ENCODE measurements at regions of chr12 and their contacts with region 1.

Region 1: DNA sequence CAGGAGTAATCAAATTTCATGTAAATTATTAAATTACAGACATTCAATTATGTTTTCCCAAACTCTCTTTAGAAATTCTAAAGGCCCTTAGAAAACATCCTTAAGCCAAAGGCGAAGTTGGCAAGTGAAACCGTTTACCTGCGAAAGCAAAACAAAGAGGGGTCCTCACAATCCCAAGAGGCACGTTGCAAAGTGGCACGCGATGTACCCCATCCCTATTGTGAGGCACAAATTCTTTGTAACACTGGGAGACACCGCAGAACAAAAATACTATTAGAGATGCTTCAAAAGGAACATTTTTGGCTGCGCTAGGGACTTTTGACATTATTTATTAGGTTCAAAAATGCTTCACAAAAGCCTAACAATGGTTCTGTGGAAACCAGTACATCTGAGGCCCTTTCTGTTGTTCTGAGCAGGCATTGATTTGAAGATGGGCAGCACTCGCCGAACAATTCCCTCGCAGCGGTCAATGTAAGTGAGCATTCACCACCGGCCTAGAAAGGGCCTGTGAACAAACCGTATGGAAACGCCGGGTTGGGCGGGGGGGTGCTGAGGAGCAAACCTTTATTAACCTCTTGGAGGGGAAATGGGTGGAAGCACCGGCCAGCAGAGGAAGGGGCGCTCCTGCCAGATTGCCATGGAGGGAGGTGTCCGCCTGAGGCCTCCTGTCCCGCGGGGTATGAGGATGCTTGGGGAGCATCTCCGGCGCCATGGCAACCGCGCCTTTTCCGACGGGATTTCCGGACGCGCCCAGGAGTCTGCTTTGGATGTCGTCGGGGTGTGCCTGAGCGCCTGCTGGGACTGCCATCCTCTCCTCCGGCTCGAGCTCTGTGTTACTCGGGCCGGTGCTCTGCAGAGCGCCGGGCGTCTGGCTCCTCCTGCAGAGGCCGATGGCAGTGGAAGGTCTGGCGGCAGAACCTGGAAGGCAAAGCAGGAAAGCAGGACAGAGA is 193.9 kb downstream of the C12orf42 start:
- DNase-seq: peak; percentile 10
- ATAC-seq: no peak
- H3K4me3 ChIP-seq: no peak overlapping the region
- H3K4me3 Mint-ChIP-seq: no peak overlapping the region
- H3K27ac ChIP-seq: no peak overlapping the region
- H3K27ac Mint-ChIP-seq: no peak overlapping the region
- H3K4me1 ChIP-seq: peaks cover 0 to 4% of the 10 kb centered on the region in 2 donors
- H3K4me1 Mint-ChIP-seq: peaks cover 9% of the 10 kb centered on the region
- H3K27me3 ChIP-seq: no peaks in the 10 kb centered on the region
- H3K27me3 Mint-ChIP-seq: no peaks in the 10 kb centered on the region
- CTCF ChIP-seq: no peak

Region 2: GRCh38 chr12:102958073-102958829 is 343.7 kb before region 1 on chr12:
- CTCF ChIA-PET with region 1: no interaction called
- POLR2A ChIA-PET with region 1: no interaction called
- intact Hi-C with region 1: loop called (anchors 10 kb)
- DNase-seq: peak; percentile 71
- ATAC-seq: peak; percentile 60
- H3K4me3 ChIP-seq: peak overlapping the region in 4 of 5 experiments; percentile 21 to 70 (median 50)
- H3K4me3 Mint-ChIP-seq: peak overlapping the region; percentile 86
- H3K27ac ChIP-seq: no peak overlapping the region
- H3K27ac Mint-ChIP-seq: no peak overlapping the region
- H3K4me1 ChIP-seq: peaks cover 36 to 53% of the 10 kb centered on the region in 2 donors
- H3K4me1 Mint-ChIP-seq: peaks cover 38% of the 10 kb centered on the region
- H3K27me3 ChIP-seq: peaks cover 1 to 93% (median 78%) of the 10 kb centered on the region in 4 experiments
- H3K27me3 Mint-ChIP-seq: peaks cover 86% of the 10 kb centered on the region
- CTCF ChIP-seq: no peak

Region 3: GRCh38 chr12:103350116-103350515 is 48.2 kb after region 1 on chr12:
- CTCF ChIA-PET with region 1: no interaction called
- POLR2A ChIA-PET with region 1: no interaction called
- intact Hi-C with region 1: loop called (anchors 10 kb)
- DNase-seq: no peak
- ATAC-seq: no peak
- H3K4me3 ChIP-seq: no peak overlapping the region
- H3K4me3 Mint-ChIP-seq: no peak overlapping the region
- H3K27ac ChIP-seq: no peak overlapping the region
- H3K27ac Mint-ChIP-seq: no peak overlapping the region
- H3K4me1 ChIP-seq: no peaks in the 10 kb centered on the region
- H3K4me1 Mint-ChIP-seq: peaks cover 16% of the 10 kb centered on the region
- H3K27me3 ChIP-seq: no peaks in the 10 kb centered on the region
- H3K27me3 Mint-ChIP-seq: no peaks in the 10 kb centered on the region
- CTCF ChIP-seq: no peak

Region 4: GRCh38 chr12:103369929-103370328 is 68.0 kb after region 1 on chr12:
- CTCF ChIA-PET with region 1: no interaction called
- POLR2A ChIA-PET with region 1: no interaction called
- intact Hi-C with region 1: no loop called
- DNase-seq: peak; percentile 17
- ATAC-seq: peak; percentile 28
- H3K4me3 ChIP-seq: no peak overlapping the region
- H3K4me3 Mint-ChIP-seq: peak overlapping the region; percentile 18
- H3K27ac ChIP-seq: no peak overlapping the region
- H3K27ac Mint-ChIP-seq: peak overlapping the region; percentile 62
- H3K4me1 ChIP-seq: peaks cover 3 to 5% of the 10 kb centered on the region in 2 donors
- H3K4me1 Mint-ChIP-seq: peaks cover 29% of the 10 kb centered on the region
- H3K27me3 ChIP-seq: no peaks in the 10 kb centered on the region
- H3K27me3 Mint-ChIP-seq: no peaks in the 10 kb centered on the region
- CTCF ChIP-seq: no peak

Region 5: DNA sequence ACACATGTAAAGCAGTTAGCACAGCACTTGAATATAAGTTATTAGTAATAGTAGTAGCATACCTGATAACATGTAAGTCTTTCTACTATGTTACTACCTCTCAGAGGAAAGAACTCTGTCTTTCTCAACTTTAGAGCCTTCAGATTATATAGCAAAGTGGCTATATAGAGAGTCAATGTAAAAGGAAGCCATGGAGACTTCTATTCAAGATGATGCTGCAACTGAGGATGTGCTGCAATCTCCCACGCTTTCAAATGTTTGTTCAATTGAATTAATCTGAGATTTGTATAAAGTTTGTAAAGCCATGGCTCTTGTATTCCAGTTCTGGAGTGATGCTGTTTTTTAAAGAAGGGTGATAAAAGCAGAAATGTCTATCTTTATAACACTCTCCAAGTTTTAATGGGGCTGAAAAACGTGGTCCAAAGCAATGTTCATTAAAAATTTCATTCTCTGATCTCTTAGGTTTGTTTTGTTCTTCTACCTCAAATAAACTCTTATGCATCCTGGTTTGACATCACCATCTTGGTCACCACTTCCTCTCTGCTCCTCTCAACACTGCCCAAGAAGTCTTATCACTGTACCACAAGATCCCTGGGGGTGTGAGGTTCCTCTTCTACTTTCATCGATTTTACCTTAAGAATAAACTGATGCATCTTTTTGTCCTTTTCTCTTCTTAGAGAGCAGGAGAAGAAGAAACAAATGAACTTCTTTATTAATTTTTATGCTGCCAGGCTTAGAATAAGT is 153.3 kb after region 1 on chr12:
- CTCF ChIA-PET with region 1: no interaction called
- POLR2A ChIA-PET with region 1: no interaction called
- intact Hi-C with region 1: no loop called
- DNase-seq: peak; percentile 86
- ATAC-seq: peak; percentile 99
- H3K4me3 ChIP-seq: peak overlapping the region in 1 of 5 experiments; percentile 27
- H3K4me3 Mint-ChIP-seq: peak overlapping the region; percentile 60
- H3K27ac ChIP-seq: peak overlapping the region; percentile 74 to 85
- H3K27ac Mint-ChIP-seq: peak overlapping the region; percentile 80
- H3K4me1 ChIP-seq: peaks cover 32 to 44% of the 10 kb centered on the region in 2 donors
- H3K4me1 Mint-ChIP-seq: peaks cover 44% of the 10 kb centered on the region
- H3K27me3 ChIP-seq: no peaks in the 10 kb centered on the region
- H3K27me3 Mint-ChIP-seq: no peaks in the 10 kb centered on the region
- CTCF ChIP-seq: no peak

Region 6: GRCh38 chr12:103586132-103586531 is 284.2 kb after region 1 on chr12:
- CTCF ChIA-PET with region 1: no interaction called
- POLR2A ChIA-PET with region 1: no interaction called
- intact Hi-C with region 1: no loop called
- DNase-seq: no peak
- ATAC-seq: no peak
- H3K4me3 ChIP-seq: no peak overlapping the region
- H3K4me3 Mint-ChIP-seq: no peak overlapping the region
- H3K27ac ChIP-seq: no peak overlapping the region
- H3K27ac Mint-ChIP-seq: no peak overlapping the region
- H3K4me1 ChIP-seq: no peaks in the 10 kb centered on the region
- H3K4me1 Mint-ChIP-seq: no peaks in the 10 kb centered on the region
- H3K27me3 ChIP-seq: no peaks in the 10 kb centered on the region
- H3K27me3 Mint-ChIP-seq: peaks cover 20% of the 10 kb centered on the region
- CTCF ChIP-seq: no peak

Measured in B cell (primary cell).